ENCODE measurements at regions of chr17 and their contacts with region 1.

Region 1: GRCh38 chr17:66301797-66302741 is at the start of gene PRKCA:
- DNase-seq: peak; percentile 51 to 90 (median 68)
- ATAC-seq: peak; percentile 74
- H3K4me3 ChIP-seq: peak within 1 kb of the TSS; percentile 82
- H3K4me3 Mint-ChIP-seq: peak within 1 kb of the TSS; percentile 100
- H3K27ac ChIP-seq: peak within 1 kb of the TSS in 1 of 2 donors; percentile 56
- H3K27ac Mint-ChIP-seq: peak within 1 kb of the TSS; percentile 85
- H3K4me1 ChIP-seq: peaks cover 26% of the 10 kb centered on the region
- H3K4me1 Mint-ChIP-seq: peaks cover 70% of the 10 kb centered on the region
- H3K27me3 ChIP-seq: no peaks in the 10 kb centered on the region
- H3K27me3 Mint-ChIP-seq: no peaks in the 10 kb centered on the region
- CTCF ChIP-seq: no peak
- total RNA-seq, gene PRKCA: 84.8 to 88.6 TPM

Region 2: DNA sequence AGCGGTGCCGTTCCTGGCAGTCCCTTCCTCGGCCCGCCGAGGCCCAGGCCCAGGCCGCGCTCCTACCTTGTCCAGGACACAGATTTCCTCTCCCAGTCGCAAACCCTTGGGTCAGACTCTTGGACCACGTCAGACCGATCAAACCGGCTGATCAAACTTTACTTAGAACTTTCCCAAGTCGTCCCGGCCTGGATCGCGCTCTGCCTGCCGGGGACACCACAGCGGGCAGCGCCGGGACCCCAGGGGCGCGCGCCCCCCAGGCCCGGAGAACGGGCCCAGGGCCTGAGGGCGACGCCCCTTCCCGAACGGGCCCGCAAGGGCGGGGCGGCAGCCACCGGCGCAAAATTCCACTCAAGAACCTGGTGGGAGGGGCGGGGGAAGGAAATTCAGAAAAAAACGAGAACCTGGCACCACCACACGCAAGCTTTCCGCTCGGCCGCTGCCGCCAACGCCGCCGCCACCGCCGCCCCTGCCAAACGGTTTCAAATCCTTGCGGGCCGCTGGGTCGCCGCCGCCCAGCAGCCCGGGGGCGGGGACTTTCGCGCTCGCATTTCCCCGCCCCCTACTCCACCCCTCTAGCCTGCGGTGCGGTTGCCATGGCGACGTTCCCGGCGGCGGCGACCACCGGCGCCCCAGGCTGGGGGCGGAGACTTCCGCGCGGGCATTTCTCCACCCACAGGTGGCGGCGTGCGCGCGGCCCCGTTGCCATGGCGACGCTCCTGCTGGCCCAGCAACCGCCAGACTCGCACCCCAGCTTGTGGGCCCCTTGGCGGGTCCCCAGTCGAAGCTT is 110.3 kb before region 1 on chr17 and contains the start of gene CEP112:
- CTCF ChIA-PET with region 1: no interaction called
- POLR2A ChIA-PET with region 1: no interaction called
- intact Hi-C with region 1: loop called in 1 of 2 experiments (anchors 5 kb)
- DNase-seq: peak; percentile 79 to 97 (median 87)
- ATAC-seq: peak; percentile 85
- H3K4me3 ChIP-seq: peak within 1 kb of the TSS; percentile 61
- H3K4me3 Mint-ChIP-seq: peak within 1 kb of the TSS; percentile 92
- H3K27ac ChIP-seq: peak within 1 kb of the TSS; percentile 49 to 50
- H3K27ac Mint-ChIP-seq: peak within 1 kb of the TSS; percentile 86
- H3K4me1 ChIP-seq: peaks cover 11% of the 10 kb centered on the region
- H3K4me1 Mint-ChIP-seq: peaks cover 16% of the 10 kb centered on the region
- H3K27me3 ChIP-seq: no peaks in the 10 kb centered on the region
- H3K27me3 Mint-ChIP-seq: no peaks in the 10 kb centered on the region
- CTCF ChIP-seq: no peak
- total RNA-seq, gene CEP112: 1.6 to 2.2 TPM

Region 3: GRCh38 chr17:66222798-66223350 is 79.2 kb before region 1 on chr17:
- CTCF ChIA-PET with region 1: no interaction called
- POLR2A ChIA-PET with region 1: no interaction called
- intact Hi-C with region 1: no loop called
- DNase-seq: no peak
- ATAC-seq: no peak
- H3K4me3 ChIP-seq: no peak overlapping the region
- H3K4me3 Mint-ChIP-seq: no peak overlapping the region
- H3K27ac ChIP-seq: no peak overlapping the region
- H3K27ac Mint-ChIP-seq: no peak overlapping the region
- H3K4me1 ChIP-seq: no peaks in the 10 kb centered on the region
- H3K4me1 Mint-ChIP-seq: no peaks in the 10 kb centered on the region
- H3K27me3 ChIP-seq: no peaks in the 10 kb centered on the region
- H3K27me3 Mint-ChIP-seq: no peaks in the 10 kb centered on the region
- CTCF ChIP-seq: no peak

Region 4: GRCh38 chr17:66233023-66233753 is 68.9 kb before region 1 on chr17:
- CTCF ChIA-PET with region 1: no interaction called
- POLR2A ChIA-PET with region 1: no interaction called
- intact Hi-C with region 1: no loop called
- DNase-seq: no peak
- ATAC-seq: no peak
- H3K4me3 ChIP-seq: no peak overlapping the region
- H3K4me3 Mint-ChIP-seq: no peak overlapping the region
- H3K27ac ChIP-seq: no peak overlapping the region
- H3K27ac Mint-ChIP-seq: no peak overlapping the region
- H3K4me1 ChIP-seq: no peaks in the 10 kb centered on the region
- H3K4me1 Mint-ChIP-seq: peaks cover 10% of the 10 kb centered on the region
- H3K27me3 ChIP-seq: no peaks in the 10 kb centered on the region
- H3K27me3 Mint-ChIP-seq: no peaks in the 10 kb centered on the region
- CTCF ChIP-seq: no peak

Region 5: GRCh38 chr17:66255112-66255511 is 47.0 kb before region 1 on chr17:
- CTCF ChIA-PET with region 1: no interaction called
- POLR2A ChIA-PET with region 1: interaction called, 5 read pairs
- intact Hi-C with region 1: loop called (anchors 5 kb)
- DNase-seq: peak in 8 of 14 experiments; percentile 21 to 87 (median 42)
- ATAC-seq: peak; percentile 95
- H3K4me3 ChIP-seq: no peak overlapping the region
- H3K4me3 Mint-ChIP-seq: peak overlapping the region; percentile 59
- H3K27ac ChIP-seq: peak overlapping the region in 1 of 2 donors; percentile 15
- H3K27ac Mint-ChIP-seq: peak overlapping the region; percentile 82
- H3K4me1 ChIP-seq: peaks cover 8% of the 10 kb centered on the region
- H3K4me1 Mint-ChIP-seq: peaks cover 23% of the 10 kb centered on the region
- H3K27me3 ChIP-seq: no peaks in the 10 kb centered on the region
- H3K27me3 Mint-ChIP-seq: no peaks in the 10 kb centered on the region
- CTCF ChIP-seq: peak; percentile 82

Region 6: GRCh38 chr17:66275651-66276050 is 26.4 kb before region 1 on chr17:
- CTCF ChIA-PET with region 1: no interaction called
- POLR2A ChIA-PET with region 1: no interaction called
- intact Hi-C with region 1: no loop called
- DNase-seq: no peak
- ATAC-seq: no peak
- H3K4me3 ChIP-seq: no peak overlapping the region
- H3K4me3 Mint-ChIP-seq: no peak overlapping the region
- H3K27ac ChIP-seq: no peak overlapping the region
- H3K27ac Mint-ChIP-seq: no peak overlapping the region
- H3K4me1 ChIP-seq: no peaks in the 10 kb centered on the region
- H3K4me1 Mint-ChIP-seq: no peaks in the 10 kb centered on the region
- H3K27me3 ChIP-seq: no peaks in the 10 kb centered on the region
- H3K27me3 Mint-ChIP-seq: no peaks in the 10 kb centered on the region
- CTCF ChIP-seq: no peak

Region 7: DNA sequence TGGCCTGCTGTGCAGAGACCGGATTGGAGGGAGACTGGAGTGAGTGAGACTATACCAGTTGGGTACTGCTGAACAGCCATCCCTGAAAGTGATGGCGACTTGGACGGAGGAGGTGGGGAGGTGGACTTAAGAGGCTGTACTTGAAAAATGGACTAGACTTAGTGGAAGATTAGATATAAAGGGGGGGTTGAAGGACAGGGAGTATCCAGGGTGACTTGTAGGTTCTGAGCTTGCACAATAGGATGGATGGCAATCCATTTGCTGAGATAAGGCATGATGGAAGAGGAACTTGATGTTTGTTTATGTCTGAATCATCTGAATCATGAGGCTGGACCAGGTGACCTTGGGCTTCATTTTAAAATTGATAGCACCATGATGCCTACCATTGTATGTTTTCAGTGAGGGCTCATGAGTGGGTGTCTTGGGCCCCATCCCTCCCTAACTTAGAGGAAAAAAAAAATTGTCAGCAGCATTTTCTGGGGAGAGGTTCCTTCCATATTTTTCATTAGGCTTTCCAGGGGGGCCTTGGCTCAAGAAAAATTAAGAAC is 41.5 kb after region 1 on chr17:
- CTCF ChIA-PET with region 1: no interaction called
- POLR2A ChIA-PET with region 1: interaction called, 5 read pairs
- intact Hi-C with region 1: loop called in 1 of 2 experiments (anchors 5 kb)
- DNase-seq: no peak
- ATAC-seq: no peak
- H3K4me3 ChIP-seq: no peak overlapping the region
- H3K4me3 Mint-ChIP-seq: no peak overlapping the region
- H3K27ac ChIP-seq: no peak overlapping the region
- H3K27ac Mint-ChIP-seq: no peak overlapping the region
- H3K4me1 ChIP-seq: peaks cover 12% of the 10 kb centered on the region
- H3K4me1 Mint-ChIP-seq: peaks cover 73% of the 10 kb centered on the region
- H3K27me3 ChIP-seq: no peaks in the 10 kb centered on the region
- H3K27me3 Mint-ChIP-seq: no peaks in the 10 kb centered on the region
- CTCF ChIP-seq: no peak

Region 8: DNA sequence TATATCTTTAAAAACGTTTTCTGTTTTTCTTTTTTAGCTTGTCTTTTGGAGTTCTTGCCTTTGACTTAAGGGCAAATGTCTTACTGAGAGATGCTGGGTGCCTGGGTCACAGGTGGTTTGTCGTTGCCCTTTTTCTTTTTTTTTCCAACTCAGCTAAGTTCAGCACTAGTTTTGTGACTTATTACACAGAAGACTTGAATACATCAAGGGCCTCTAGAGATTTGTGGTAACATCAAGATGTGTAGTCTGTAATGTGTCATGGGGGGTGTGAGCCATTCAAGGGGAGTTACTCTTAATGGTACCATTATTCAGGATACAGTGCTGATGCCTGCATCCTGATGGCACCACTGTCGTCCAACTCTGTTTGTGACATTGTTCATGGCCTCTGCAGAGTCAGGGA is 95.4 kb after region 1 on chr17:
- CTCF ChIA-PET with region 1: no interaction called
- POLR2A ChIA-PET with region 1: interaction called, 6 read pairs
- intact Hi-C with region 1: loop called in 1 of 2 experiments (anchors 5 kb)
- DNase-seq: no peak
- ATAC-seq: peak; percentile 48
- H3K4me3 ChIP-seq: no peak overlapping the region
- H3K4me3 Mint-ChIP-seq: peak overlapping the region; percentile 64
- H3K27ac ChIP-seq: peak overlapping the region; percentile 12 to 40
- H3K27ac Mint-ChIP-seq: peak overlapping the region; percentile 89
- H3K4me1 ChIP-seq: peaks cover 43% of the 10 kb centered on the region
- H3K4me1 Mint-ChIP-seq: peaks cover 83% of the 10 kb centered on the region
- H3K27me3 ChIP-seq: no peaks in the 10 kb centered on the region
- H3K27me3 Mint-ChIP-seq: no peaks in the 10 kb centered on the region
- CTCF ChIP-seq: no peak

Region 9: DNA sequence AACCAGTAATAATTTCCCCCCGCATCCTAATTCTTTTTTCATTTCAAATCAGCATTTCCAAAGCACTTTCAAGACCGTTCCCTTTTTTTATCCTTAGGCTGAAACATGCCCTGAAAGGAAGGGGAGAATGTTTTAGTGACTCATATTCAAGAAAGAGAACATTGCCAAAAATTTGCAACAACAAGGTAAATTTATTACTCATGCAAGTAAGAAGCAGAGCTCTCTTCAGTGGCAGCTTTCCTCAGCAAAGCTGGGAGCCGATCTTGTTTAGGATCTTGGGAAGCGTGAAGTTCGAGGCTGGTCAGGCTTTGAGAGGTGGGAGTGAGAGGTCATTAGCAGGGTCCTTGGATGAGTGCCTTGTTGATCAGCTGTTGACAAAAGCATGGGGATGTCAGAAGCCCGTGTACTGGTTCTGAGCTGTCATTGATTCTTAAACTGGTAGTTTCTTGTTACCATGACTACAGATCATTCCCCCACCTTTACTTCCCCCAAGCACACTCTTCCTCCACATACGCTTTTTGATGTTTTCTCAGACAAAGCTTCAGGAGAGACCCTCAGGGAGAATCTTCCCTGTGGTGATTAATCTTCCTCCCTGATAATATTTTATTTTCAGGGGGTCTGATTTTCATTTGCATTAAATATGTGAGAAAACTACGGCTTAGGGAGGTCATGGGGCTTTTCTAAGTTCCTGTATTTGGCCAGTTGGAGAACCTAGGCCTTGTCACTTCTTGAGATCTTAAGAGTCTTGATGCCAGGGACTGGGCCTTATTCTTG is 130.0 kb after region 1 on chr17:
- CTCF ChIA-PET with region 1: no interaction called
- POLR2A ChIA-PET with region 1: no interaction called
- intact Hi-C with region 1: loop called in 1 of 2 experiments (anchors 5 kb)
- DNase-seq: no peak
- ATAC-seq: no peak
- H3K4me3 ChIP-seq: no peak overlapping the region
- H3K4me3 Mint-ChIP-seq: no peak overlapping the region
- H3K27ac ChIP-seq: no peak overlapping the region
- H3K27ac Mint-ChIP-seq: no peak overlapping the region
- H3K4me1 ChIP-seq: peaks cover 45% of the 10 kb centered on the region
- H3K4me1 Mint-ChIP-seq: peaks cover 31% of the 10 kb centered on the region
- H3K27me3 ChIP-seq: no peaks in the 10 kb centered on the region
- H3K27me3 Mint-ChIP-seq: no peaks in the 10 kb centered on the region
- CTCF ChIP-seq: no peak

Measured in CD4-positive, alpha-beta T cell (primary cell).